Transverse colon (tissue), 4 donors: ENCODE measurements at regions of chr12 and their contacts with region 1.

Region 1: GRCh38 chr12:15752785-15753184 is 36.4 kb downstream of the EPS8 start:
- DNase-seq: no peak
- H3K4me3 ChIP-seq: no peak overlapping the region
- H3K27ac ChIP-seq: no peak overlapping the region
- H3K4me1 ChIP-seq: peaks cover 0 to 26% (median 4%) of the 10 kb centered on the region in 4 donors
- H3K27me3 ChIP-seq: no peaks in the 10 kb centered on the region
- CTCF ChIP-seq: no peak
- EP300 ChIP-seq: no peak
- POLR2A ChIP-seq: no peak

Region 2: GRCh38 chr12:15662303-15662980 is 90.3 kb before region 1 on chr12:
- in situ Hi-C with region 1: no loop called
- intact Hi-C with region 1: no loop called
- DNase-seq: no peak
- H3K4me3 ChIP-seq: no peak overlapping the region
- H3K27ac ChIP-seq: no peak overlapping the region
- H3K4me1 ChIP-seq: peaks cover 0 to 4% (median 0%) of the 10 kb centered on the region in 4 donors
- H3K27me3 ChIP-seq: no peaks in the 10 kb centered on the region
- CTCF ChIP-seq: no peak
- EP300 ChIP-seq: no peak
- POLR2A ChIP-seq: no peak

Region 3: DNA sequence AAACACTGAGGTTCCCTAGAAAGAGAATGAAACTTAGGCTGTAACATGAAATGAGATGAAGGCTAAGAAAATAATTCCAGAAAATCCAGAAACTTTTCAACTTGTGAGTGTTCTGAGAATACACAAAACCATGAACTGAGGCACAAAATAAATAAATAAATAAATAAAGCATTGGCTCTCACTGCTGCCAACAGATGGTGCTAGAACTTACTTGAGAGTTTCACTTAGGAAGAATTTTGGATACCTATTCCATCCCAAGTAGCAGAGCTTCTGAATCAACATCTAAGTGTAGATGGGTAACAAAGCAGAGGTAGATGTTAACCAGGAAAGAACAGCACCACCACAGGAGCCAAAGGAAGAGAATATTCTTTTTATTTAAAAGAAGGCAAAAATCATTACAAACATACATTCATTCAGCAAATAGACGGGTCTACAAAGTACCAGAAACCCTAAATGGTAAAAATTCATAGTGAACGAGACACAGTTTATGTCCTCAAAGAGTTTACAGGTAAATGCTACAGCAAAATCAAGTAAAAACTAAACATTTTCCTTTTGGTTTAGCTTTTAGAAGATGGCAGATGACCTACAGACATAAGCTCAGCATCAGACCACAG is 19.7 kb after region 1 on chr12:
- in situ Hi-C with region 1: no loop called
- intact Hi-C with region 1: loop called (anchors 1 kb)
- DNase-seq: no peak
- H3K4me3 ChIP-seq: no peak overlapping the region
- H3K27ac ChIP-seq: peak overlapping the region in 3 of 4 donors; percentile 18 to 53 (median 26)
- H3K4me1 ChIP-seq: peaks cover 5 to 62% (median 28%) of the 10 kb centered on the region in 4 donors
- H3K27me3 ChIP-seq: no peaks in the 10 kb centered on the region
- CTCF ChIP-seq: peak in 4 of 5 experiments; percentile 31 to 40 (median 34)
- EP300 ChIP-seq: no peak
- POLR2A ChIP-seq: no peak